K562 (cell line): ENCODE measurements at regions of chr5 and their contacts with region 1.

Region 1: DNA sequence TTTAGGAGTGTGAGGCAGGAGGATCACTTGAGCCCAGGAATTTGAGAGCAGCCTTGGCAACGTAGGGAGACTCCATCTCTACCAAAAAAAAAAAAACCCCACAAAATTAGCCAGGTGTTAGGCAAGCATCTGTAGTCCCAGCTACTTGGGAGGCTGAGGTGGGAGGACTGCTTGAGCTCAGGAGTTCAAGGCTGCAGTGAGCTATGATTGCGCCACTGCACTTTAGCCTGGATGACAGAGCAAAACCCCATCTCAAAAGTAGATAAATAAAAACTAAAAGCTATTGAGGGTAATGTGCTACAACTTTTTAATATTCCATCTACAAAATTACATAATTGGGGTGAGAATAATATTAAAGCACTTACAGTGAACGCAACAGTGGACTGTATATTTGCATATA is 5.9 kb downstream of the BDP1 start:
- DNase-seq: no peak
- ATAC-seq: no peak
- H3K4me3 ChIP-seq: no peak overlapping the region
- H3K27ac ChIP-seq: no peak overlapping the region
- H3K4me1 ChIP-seq: peaks cover 0 to 7% of the 10 kb centered on the region in 2 experiments; a peak in 1 of 5 replicates
- H3K27me3 ChIP-seq: no peaks in the 10 kb centered on the region
- CTCF ChIP-seq: no peak
- EP300 ChIP-seq: no peak
- POLR2A ChIP-seq: no peak
- RAD21 ChIP-seq: no peak

Region 2: DNA sequence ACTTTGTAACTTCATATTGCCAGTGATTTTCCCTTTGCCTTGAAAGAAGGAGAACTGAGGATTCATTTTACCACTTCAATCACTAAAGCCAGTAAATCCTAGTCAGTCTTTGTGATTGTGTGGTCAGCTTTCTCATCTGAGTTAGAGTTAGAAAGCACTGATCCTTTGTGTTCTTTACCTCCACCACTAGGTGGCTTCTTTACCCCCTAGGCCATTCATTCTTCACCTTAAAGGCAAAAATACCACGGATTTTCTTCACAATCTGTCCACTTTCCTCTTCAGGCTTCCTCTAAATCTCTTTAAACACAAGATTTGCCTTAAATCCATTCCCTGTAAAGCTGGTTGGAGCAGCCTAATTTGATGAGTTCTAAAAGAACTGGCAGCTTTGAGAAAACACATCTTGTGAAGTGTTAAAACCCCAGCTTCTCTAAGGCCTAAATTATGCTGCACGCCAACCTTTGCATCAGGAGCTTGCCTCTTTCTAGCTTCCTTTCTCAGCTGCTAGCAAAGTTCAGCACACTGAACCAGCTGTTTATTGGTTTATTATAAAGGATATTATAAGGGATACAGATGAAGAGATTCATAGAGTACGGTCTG is 14.5 kb after region 1 on chr5:
- CTCF ChIA-PET with region 1: no interaction called
- POLR2A ChIA-PET with region 1: interaction called, 11 read pairs
- in situ Hi-C with region 1: no loop called
- intact Hi-C with region 1: no loop called
- DNase-seq: peak; percentile 14 to 59 (median 49)
- ATAC-seq: peak; percentile 89
- H3K4me3 ChIP-seq: no peak overlapping the region
- H3K27ac ChIP-seq: no peak overlapping the region
- H3K4me1 ChIP-seq: no peaks in the 10 kb centered on the region
- H3K27me3 ChIP-seq: no peaks in the 10 kb centered on the region
- CTCF ChIP-seq: peak; percentile 34 to 67 (median 58); a peak in 5 of 6 replicates
- EP300 ChIP-seq: no peak
- POLR2A ChIP-seq: no peak
- RAD21 ChIP-seq: peak in 1 of 2 experiments; percentile 36; a peak in 2 of 4 replicates

Region 3: GRCh38 chr5:71748369-71748780 is 287.0 kb after region 1 on chr5:
- CTCF ChIA-PET with region 1: no interaction called
- POLR2A ChIA-PET with region 1: no interaction called
- in situ Hi-C with region 1: no loop called
- intact Hi-C with region 1: no loop called
- DNase-seq: no peak
- ATAC-seq: no peak
- H3K4me3 ChIP-seq: no peak overlapping the region
- H3K27ac ChIP-seq: no peak overlapping the region
- H3K4me1 ChIP-seq: no peaks in the 10 kb centered on the region
- H3K27me3 ChIP-seq: peaks cover 0 to 5% of the 10 kb centered on the region in 2 experiments; a peak in 1 of 5 replicates
- CTCF ChIP-seq: no peak
- EP300 ChIP-seq: no peak
- POLR2A ChIP-seq: no peak
- RAD21 ChIP-seq: no peak